GM18951 (cell line): ENCODE measurements at regions of chr2 and their contacts with region 1.

Region 1: DNA sequence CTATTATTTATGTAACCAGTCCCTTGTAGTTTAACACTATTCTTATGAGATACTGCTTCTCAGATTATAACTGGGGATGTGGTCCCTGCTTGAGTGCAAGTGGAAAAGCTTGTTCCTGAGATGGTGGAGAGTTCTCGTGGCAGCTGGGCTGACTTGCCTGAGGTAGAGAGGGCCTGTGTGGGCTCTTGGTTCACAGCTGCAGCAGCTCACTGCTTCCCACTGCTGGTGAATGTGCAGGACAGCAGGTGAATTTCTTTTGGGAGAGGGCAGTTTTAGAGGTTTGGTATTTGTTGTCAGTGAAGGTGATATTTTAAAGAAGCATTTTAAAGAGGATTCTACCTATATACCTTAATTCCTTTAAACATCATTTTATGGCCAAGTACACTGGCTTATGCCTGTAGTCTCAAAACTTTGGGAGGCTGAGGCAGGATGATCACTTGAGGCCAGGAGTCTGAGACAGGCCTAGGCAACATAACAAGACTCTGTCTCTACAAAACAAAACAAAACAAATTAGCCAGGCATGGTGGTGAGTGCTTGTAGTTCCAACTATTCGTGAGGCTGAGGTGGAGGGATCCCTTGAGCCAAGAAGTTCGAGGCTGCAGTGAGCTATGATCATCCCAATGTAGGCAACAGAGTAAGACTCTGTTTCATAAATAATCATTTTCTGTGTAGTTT is 94.8 kb downstream of the MTA3 start:
- POLR2A ChIP-seq: no peak

Region 2: DNA sequence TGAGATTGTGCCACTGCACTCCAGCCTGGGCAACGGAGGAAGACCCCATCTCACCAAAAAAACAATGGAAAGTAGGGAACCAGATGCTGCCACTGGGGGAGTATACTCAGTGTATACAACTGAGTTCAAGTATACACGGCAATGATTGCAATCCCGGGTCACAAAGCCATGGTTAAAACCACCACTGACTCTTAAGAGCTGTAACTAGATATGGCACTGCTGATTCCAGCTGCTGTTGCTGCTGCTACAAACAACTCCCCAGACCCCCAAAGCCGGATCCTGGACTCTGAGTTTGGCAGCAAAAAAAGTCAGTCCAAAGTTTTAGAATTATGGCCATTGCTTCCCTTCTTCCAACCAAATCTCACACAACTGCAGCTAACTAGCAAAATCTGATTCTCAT is 258.6 kb before region 1 on chr2:
- in situ Hi-C with region 1: no loop called
- POLR2A ChIP-seq: no peak

Region 3: GRCh38 chr2:42503291-42503690 is 160.0 kb before region 1 on chr2:
- in situ Hi-C with region 1: loop called (anchors 5 kb)
- POLR2A ChIP-seq: no peak